Activated CD4-positive, alpha-beta memory T cell treated with anti-CD3 and anti-CD28 coated beads for 36 hours (primary cell): ENCODE measurements at regions of chr2 and their contacts with region 1.

Region 1: GRCh38 chr2:199739413-199740110 is 111.4 kb downstream of the FTCDNL1 start:
- DNase-seq: peak; percentile 70
- H3K4me3 Mint-ChIP-seq: no peak overlapping the region
- H3K27ac Mint-ChIP-seq: no peak overlapping the region
- H3K4me1 Mint-ChIP-seq: peaks cover 6% of the 10 kb centered on the region
- H3K27me3 Mint-ChIP-seq: peaks cover 23% of the 10 kb centered on the region

Region 2: DNA sequence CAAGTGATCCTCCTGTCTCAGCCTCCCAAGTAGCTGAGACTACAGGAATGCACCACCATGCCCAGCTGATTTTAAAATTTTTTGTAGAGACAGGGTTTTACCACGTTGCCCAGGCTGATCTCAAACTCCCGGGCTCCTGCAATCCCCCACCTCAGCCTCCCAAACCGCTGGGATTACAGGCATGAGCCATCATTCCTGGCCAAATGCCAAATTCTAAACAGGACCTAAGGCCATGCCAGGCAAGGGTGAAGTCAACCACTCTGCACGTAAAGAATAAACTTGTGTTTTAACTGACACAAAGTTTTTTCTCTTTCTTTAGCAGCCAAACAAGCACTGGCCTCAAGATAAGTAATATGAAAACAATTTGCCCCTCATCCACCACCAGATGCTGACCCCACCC is 244.4 kb before region 1 on chr2:
- CTCF ChIA-PET with region 1: no interaction called
- POLR2A ChIA-PET with region 1: no interaction called
- intact Hi-C with region 1: no loop called
- DNase-seq: no peak
- H3K4me3 Mint-ChIP-seq: no peak overlapping the region
- H3K27ac Mint-ChIP-seq: no peak overlapping the region
- H3K4me1 Mint-ChIP-seq: no peaks in the 10 kb centered on the region
- H3K27me3 Mint-ChIP-seq: peaks cover 10% of the 10 kb centered on the region

Region 3: DNA sequence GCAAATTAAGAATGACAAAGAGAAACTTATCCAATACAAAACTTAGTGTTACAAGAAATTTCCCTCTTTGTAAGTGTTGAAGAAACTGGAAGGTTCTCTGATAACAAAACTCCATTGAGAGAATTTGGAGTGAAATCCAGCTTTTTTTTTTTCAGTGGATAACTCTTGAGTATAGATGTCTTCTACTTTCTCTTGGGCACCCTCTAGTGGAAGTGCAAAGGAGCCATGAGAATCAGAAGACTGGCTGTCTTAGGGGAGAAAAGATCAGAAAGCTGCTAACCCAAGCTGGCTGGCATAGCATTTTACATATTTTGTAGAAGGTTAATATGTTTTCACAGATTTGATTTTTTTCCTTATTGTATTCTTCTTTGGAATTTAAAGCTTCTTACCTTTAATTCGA is 143.0 kb before region 1 on chr2:
- CTCF ChIA-PET with region 1: interaction called, 3 read pairs
- POLR2A ChIA-PET with region 1: no interaction called
- intact Hi-C with region 1: loop called (anchors 2 kb)
- DNase-seq: no peak
- H3K4me3 Mint-ChIP-seq: no peak overlapping the region
- H3K27ac Mint-ChIP-seq: no peak overlapping the region
- H3K4me1 Mint-ChIP-seq: no peaks in the 10 kb centered on the region
- H3K27me3 Mint-ChIP-seq: no peaks in the 10 kb centered on the region

Region 4: GRCh38 chr2:199727306-199727705 is 12.3 kb before region 1 on chr2:
- CTCF ChIA-PET with region 1: interaction called, 16 read pairs
- POLR2A ChIA-PET with region 1: no interaction called
- intact Hi-C with region 1: no loop called
- DNase-seq: no peak
- H3K4me3 Mint-ChIP-seq: no peak overlapping the region
- H3K27ac Mint-ChIP-seq: no peak overlapping the region
- H3K4me1 Mint-ChIP-seq: no peaks in the 10 kb centered on the region
- H3K27me3 Mint-ChIP-seq: peaks cover 37% of the 10 kb centered on the region

Region 5: GRCh38 chr2:199760574-199760973 is 21.0 kb after region 1 on chr2:
- CTCF ChIA-PET with region 1: interaction called, 11 read pairs
- POLR2A ChIA-PET with region 1: no interaction called
- intact Hi-C with region 1: no loop called
- DNase-seq: no peak
- H3K4me3 Mint-ChIP-seq: no peak overlapping the region
- H3K27ac Mint-ChIP-seq: no peak overlapping the region
- H3K4me1 Mint-ChIP-seq: no peaks in the 10 kb centered on the region
- H3K27me3 Mint-ChIP-seq: peaks cover 5% of the 10 kb centered on the region